Prostate gland (tissue), 2 donors: ENCODE measurements at regions of chr3 and their contacts with region 1.

Region 1: GRCh38 chr3:155870133-155870944 is at the start of gene GMPS:
- DNase-seq: peak; percentile 93
- H3K4me3 ChIP-seq: peak within 1 kb of the TSS; percentile 89 to 98
- H3K27ac ChIP-seq: peak within 1 kb of the TSS; percentile 86 to 92
- H3K4me1 ChIP-seq: no peaks in the 10 kb centered on the region
- H3K27me3 ChIP-seq: no peaks in the 10 kb centered on the region
- CTCF ChIP-seq: peak; percentile 25 to 89 (median 66)
- POLR2A ChIP-seq: peak; percentile 77
- total RNA-seq, gene GMPS: 24.7 to 51.0 TPM

Region 2: GRCh38 chr3:155753036-155753639 is 117.2 kb before region 1 on chr3:
- intact Hi-C with region 1: no loop called
- DNase-seq: no peak
- H3K4me3 ChIP-seq: no peak overlapping the region
- H3K27ac ChIP-seq: no peak overlapping the region
- H3K4me1 ChIP-seq: no peaks in the 10 kb centered on the region
- H3K27me3 ChIP-seq: no peaks in the 10 kb centered on the region
- CTCF ChIP-seq: peak in 3 of 4 experiments; percentile 11 to 35 (median 12)
- POLR2A ChIP-seq: no peak

Region 3: DNA sequence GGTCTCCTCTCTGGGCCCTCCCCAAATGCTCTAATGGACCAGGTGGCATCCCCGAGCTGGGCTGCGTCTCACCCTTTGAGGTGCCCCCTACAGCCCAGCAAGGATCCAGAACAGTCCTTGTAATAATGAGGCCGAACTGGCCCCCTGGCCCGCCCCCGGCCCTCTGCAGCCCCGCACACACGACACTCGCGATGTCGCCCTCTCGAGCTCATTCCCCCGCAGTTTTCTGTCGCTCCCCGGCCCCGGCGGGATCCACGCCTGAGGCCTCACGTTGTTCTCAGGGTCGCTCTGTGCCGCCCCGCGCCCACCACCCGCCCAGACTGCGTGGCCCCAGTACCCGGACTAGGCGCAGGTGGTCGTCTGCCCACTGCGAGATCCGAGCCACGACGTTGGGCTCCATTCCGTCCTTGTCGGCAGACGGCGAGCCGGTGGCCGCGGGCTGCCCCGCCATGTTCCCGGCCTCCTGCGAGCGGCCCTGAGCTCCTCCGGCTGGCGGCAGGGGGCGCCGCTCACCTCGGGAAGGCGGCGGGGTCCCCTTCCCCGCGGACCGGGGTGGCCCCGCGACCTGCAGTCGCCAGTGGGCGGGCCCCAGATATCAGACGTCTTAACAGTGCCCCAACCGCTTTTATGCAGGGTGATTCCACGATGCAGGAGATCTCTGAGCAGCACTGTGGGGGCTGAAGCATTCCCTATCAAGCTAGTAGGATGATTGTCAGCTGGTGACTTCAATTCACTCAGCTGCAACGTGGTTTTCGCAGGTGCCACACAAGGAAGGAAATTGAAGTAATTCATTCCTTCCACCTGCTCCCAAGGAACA is 64.3 kb before region 1 on chr3 and contains the start of gene C3orf33:
- intact Hi-C with region 1: loop called (anchors 5 kb)
- DNase-seq: peak; percentile 48
- H3K4me3 ChIP-seq: peak within 1 kb of the TSS; percentile 62 to 74
- H3K27ac ChIP-seq: peak within 1 kb of the TSS; percentile 83
- H3K4me1 ChIP-seq: no peaks in the 10 kb centered on the region
- H3K27me3 ChIP-seq: no peaks in the 10 kb centered on the region
- CTCF ChIP-seq: peak; percentile 50 to 84 (median 70)
- POLR2A ChIP-seq: peak; percentile 4
- total RNA-seq, gene C3orf33: 4.9 to 7.6 TPM

Region 4: DNA sequence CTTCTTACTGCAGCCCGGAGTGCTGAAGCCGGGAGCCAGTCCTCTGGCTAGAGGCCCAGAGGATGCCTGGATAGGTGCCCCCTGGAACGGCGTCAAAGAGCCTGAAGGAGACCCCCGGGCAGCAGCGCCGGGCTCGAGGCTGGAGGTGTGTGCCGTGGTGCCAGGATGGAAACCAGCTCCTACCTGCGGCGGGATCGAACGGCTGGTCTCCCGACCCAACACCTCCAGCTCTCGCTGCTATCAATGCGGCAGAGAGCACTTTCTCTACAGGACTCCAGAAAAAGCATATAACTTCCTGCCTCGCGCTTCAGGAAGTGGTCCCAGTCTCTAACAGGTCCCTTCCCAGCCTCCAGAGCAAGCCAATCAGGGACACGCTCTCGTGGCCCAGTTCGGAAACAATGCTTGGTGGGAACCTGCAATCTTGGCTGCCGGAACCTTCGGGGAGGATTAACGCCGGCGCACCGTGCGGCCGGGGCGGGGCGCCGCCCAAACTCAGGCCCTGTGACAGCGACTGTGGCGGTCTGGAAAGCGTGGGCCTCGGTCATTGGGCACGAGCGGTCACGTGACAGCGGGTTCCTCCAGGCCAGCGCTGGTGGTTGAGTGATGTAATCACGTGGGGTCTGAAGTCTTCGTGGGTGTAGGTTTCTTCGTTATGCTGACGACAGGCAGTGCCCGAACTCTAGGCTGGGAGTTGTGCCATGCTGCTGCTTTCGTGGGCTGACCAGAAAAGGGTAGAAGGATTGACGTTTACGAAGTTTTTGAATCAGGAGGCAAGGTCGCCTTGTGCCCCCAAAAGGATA is 16.0 kb before region 1 on chr3 and contains the start of gene SLC33A1:
- intact Hi-C with region 1: loop called (anchors 1 kb)
- DNase-seq: peak; percentile 99
- H3K4me3 ChIP-seq: peak within 1 kb of the TSS; percentile 77 to 97
- H3K27ac ChIP-seq: peak within 1 kb of the TSS; percentile 88 to 93
- H3K4me1 ChIP-seq: no peaks in the 10 kb centered on the region
- H3K27me3 ChIP-seq: no peaks in the 10 kb centered on the region
- CTCF ChIP-seq: peak in 2 of 4 experiments; percentile 17 to 28
- POLR2A ChIP-seq: peak; percentile 56
- total RNA-seq, gene SLC33A1: 43.4 to 43.9 TPM